Caco-2 (cell line): ENCODE measurements at regions of chr9 and their contacts with region 1.

Region 1: GRCh38 chr9:127916665-127917613 is at the start of gene ST6GALNAC4:
- DNase-seq: peak; percentile 91 to 94
- H3K4me3 ChIP-seq: peak within 1 kb of the TSS; percentile 62
- H3K4me3 Mint-ChIP-seq: peak within 1 kb of the TSS; percentile 72
- H3K27ac Mint-ChIP-seq: no peak within 1 kb of the TSS
- H3K4me1 ChIP-seq: peaks cover 48% of the 10 kb centered on the region
- H3K4me1 Mint-ChIP-seq: peaks cover 7% of the 10 kb centered on the region
- H3K27me3 ChIP-seq: no peaks in the 10 kb centered on the region
- H3K27me3 Mint-ChIP-seq: no peaks in the 10 kb centered on the region
- CTCF ChIP-seq: no peak
- total RNA-seq, gene ST6GALNAC4: 12.1 and 13.2 TPM in 2 replicates

Region 2: DNA sequence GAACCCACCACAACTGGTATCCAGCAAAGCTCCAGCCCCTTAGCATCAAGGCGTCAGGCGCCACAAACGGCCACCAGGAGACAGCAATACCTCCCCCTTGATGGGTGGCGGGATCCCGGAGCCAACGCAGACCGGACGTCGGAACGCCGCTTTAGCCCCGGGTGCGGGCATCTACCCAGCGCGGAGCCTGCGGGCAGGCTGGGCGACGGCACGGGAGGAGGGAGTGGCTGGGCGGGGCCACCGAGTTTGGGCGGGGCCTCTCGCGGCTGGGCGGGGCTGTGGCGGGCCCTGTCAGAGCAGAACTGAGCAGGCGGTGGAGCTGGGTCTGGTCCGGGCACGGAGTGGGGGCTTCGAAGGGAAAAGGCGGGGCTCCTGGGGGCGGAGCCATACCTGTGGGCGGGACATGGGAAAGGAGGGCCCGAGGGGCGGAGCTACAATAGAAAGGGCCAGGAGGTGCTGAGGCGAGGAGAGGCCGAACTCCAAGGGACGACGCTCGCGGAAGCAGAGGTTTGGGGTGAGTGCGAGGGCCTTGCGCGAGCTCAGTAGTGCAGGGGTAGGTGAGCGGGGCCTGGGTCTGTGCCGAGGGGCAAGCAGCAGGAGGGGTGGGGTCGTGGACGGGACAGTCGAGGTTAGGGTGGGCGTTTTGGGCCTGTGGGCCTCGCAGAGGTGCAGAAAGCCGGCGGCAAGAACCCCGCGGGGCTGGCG is 692.6 kb before region 1 on chr9:
- CTCF ChIA-PET with region 1: no interaction called
- POLR2A ChIA-PET with region 1: no interaction called
- intact Hi-C with region 1: loop called (anchors 10 kb)
- DNase-seq: peak; percentile 96 to 97
- H3K4me3 ChIP-seq: peak overlapping the region; percentile 95
- H3K4me3 Mint-ChIP-seq: peak overlapping the region; percentile 92
- H3K27ac Mint-ChIP-seq: peak overlapping the region; percentile 92
- H3K4me1 ChIP-seq: peaks cover 6% of the 10 kb centered on the region
- H3K4me1 Mint-ChIP-seq: peaks cover 18% of the 10 kb centered on the region
- H3K27me3 ChIP-seq: no peaks in the 10 kb centered on the region
- H3K27me3 Mint-ChIP-seq: peaks cover 3% of the 10 kb centered on the region
- CTCF ChIP-seq: no peak

Region 3: GRCh38 chr9:127503947-127504782 is 412.8 kb before region 1 on chr9:
- CTCF ChIA-PET with region 1: no interaction called
- POLR2A ChIA-PET with region 1: no interaction called
- intact Hi-C with region 1: loop called (anchors 1 kb)
- DNase-seq: peak; percentile 87
- H3K4me3 ChIP-seq: no peak overlapping the region
- H3K4me3 Mint-ChIP-seq: no peak overlapping the region
- H3K27ac Mint-ChIP-seq: no peak overlapping the region
- H3K4me1 ChIP-seq: no peaks in the 10 kb centered on the region
- H3K4me1 Mint-ChIP-seq: no peaks in the 10 kb centered on the region
- H3K27me3 ChIP-seq: no peaks in the 10 kb centered on the region
- H3K27me3 Mint-ChIP-seq: no peaks in the 10 kb centered on the region
- CTCF ChIP-seq: peak; percentile 90 to 94

Region 4: GRCh38 chr9:127586537-127586936 is 330.4 kb before region 1 on chr9:
- CTCF ChIA-PET with region 1: no interaction called
- POLR2A ChIA-PET with region 1: no interaction called
- intact Hi-C with region 1: loop called (anchors 1 kb)
- DNase-seq: peak; percentile 86 to 87
- H3K4me3 ChIP-seq: no peak overlapping the region
- H3K4me3 Mint-ChIP-seq: no peak overlapping the region
- H3K27ac Mint-ChIP-seq: no peak overlapping the region
- H3K4me1 ChIP-seq: peaks cover 5% of the 10 kb centered on the region
- H3K4me1 Mint-ChIP-seq: no peaks in the 10 kb centered on the region
- H3K27me3 ChIP-seq: no peaks in the 10 kb centered on the region; the same call in 1 of the 2 replicates
- H3K27me3 Mint-ChIP-seq: no peaks in the 10 kb centered on the region
- CTCF ChIP-seq: peak; percentile 83 to 93

Region 5: GRCh38 chr9:127802576-127803443 is 114.1 kb before region 1 on chr9 and contains the start of gene FPGS:
- CTCF ChIA-PET with region 1: no interaction called
- POLR2A ChIA-PET with region 1: interaction called, 5 read pairs
- intact Hi-C with region 1: loop called (anchors 2 kb)
- DNase-seq: peak; percentile 89 to 90
- H3K4me3 ChIP-seq: peak within 1 kb of the TSS; percentile 86
- H3K4me3 Mint-ChIP-seq: peak within 1 kb of the TSS; percentile 86
- H3K27ac Mint-ChIP-seq: peak within 1 kb of the TSS; percentile 77
- H3K4me1 ChIP-seq: peaks cover 26% of the 10 kb centered on the region
- H3K4me1 Mint-ChIP-seq: peaks cover 14% of the 10 kb centered on the region
- H3K27me3 ChIP-seq: no peaks in the 10 kb centered on the region
- H3K27me3 Mint-ChIP-seq: no peaks in the 10 kb centered on the region
- CTCF ChIP-seq: peak in 1 of 2 experiments; percentile 4
- total RNA-seq, gene FPGS: 54.4 and 57.3 TPM in 2 replicates

Region 6: DNA sequence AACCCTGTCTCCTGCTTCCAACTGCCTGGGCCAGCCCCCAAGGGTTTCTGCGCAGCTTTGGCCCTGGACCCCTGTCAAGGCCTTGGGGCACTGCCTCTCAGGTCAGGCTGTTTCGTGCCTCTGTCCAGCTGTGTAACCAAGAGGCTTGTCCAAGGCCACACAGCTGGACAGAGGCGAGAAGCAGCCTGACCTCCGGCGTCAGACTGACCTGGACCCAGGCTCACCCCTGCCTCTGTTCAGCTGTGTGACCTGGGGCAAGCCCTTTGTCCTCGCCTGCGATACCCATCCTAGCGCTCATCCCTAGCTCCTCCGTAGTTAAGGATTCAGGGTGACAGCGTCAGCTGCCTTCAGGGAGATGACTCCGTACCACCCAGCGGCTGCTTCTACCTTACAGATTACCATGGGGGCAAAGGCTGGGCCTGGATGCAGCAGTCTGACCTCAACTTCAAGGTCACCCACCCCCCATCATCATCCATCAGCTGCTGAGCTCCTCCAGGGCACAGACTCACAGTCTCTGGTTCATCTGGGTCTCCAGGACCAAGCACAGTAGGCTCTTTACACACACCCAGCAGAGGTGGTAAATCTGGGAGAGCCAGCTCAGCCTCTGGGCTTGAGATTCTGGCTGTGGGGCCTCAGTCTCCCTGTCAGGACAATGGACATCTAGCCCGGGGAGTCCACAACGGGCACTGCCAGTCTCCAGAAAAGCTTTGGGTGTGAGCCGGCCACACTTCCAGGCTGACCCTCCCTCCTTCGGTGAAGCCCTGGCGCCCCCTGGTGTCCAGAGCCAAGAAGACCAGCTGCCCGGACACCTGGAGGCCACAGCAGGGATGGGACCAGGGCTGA is 47.4 kb before region 1 on chr9:
- CTCF ChIA-PET with region 1: interaction called, 5 read pairs
- POLR2A ChIA-PET with region 1: no interaction called
- intact Hi-C with region 1: loop called (anchors 5 kb)
- DNase-seq: peak; percentile 88 to 93
- H3K4me3 ChIP-seq: no peak overlapping the region
- H3K4me3 Mint-ChIP-seq: no peak overlapping the region
- H3K27ac Mint-ChIP-seq: no peak overlapping the region
- H3K4me1 ChIP-seq: no peaks in the 10 kb centered on the region
- H3K4me1 Mint-ChIP-seq: peaks cover 11% of the 10 kb centered on the region
- H3K27me3 ChIP-seq: no peaks in the 10 kb centered on the region
- H3K27me3 Mint-ChIP-seq: no peaks in the 10 kb centered on the region
- CTCF ChIP-seq: peak; percentile 94 to 95

Region 7: DNA sequence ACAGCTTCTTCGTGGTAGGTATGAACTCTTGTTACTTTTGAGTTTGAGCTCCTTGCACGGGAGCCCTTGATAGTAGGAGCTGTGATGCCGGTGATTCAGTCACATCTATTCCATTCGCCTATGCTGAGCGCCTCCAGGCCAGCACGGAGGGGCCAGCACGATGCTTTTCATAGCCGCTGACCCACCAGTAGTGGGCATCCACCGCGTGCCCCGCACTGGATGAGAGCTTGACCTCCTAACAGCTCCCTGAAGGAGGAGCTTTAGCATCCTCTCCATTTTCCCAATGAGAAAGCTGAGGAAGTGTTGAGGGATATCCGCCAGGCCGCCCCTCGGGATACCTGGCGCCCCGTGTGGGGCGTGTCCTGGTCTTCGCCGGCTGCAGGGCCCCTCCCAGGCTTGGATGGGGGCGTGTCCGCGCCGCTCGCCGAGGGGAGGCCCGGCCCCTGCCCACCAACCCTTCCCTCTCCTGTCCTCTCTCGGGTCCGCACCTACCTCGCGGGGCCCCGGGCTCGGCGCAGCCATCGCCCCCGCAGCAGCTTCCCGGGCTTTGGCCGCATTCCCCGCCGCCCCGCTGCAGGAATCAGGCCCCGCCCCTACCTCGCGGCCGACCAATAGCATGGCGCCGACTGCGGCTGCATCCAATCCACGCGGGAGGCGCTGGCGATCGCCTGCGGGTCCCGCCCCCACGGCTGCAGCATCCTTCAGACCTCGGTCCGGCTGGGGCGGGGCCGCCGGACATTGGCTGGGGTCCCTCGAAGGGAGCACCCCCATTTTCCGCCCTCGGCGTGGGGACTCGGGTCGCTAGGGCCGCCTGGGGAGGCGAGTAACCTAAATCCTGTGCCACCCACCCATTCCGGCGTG is 13.5 kb after region 1 on chr9 and contains the start of gene PIP5KL1:
- CTCF ChIA-PET with region 1: interaction called, 12 read pairs
- POLR2A ChIA-PET with region 1: no interaction called
- intact Hi-C with region 1: no loop called
- DNase-seq: peak; percentile 87 to 93
- H3K4me3 ChIP-seq: peak within 1 kb of the TSS; percentile 67
- H3K4me3 Mint-ChIP-seq: peak within 1 kb of the TSS; percentile 69
- H3K27ac Mint-ChIP-seq: peak within 1 kb of the TSS; percentile 87
- H3K4me1 ChIP-seq: peaks cover 18% of the 10 kb centered on the region
- H3K4me1 Mint-ChIP-seq: peaks cover 7% of the 10 kb centered on the region
- H3K27me3 ChIP-seq: no peaks in the 10 kb centered on the region
- H3K27me3 Mint-ChIP-seq: no peaks in the 10 kb centered on the region
- CTCF ChIP-seq: no peak
- total RNA-seq, gene PIP5KL1: 2.3 and 3.8 TPM in 2 replicates